Naive thymus-derived CD4-positive, alpha-beta T cell (primary cell): ENCODE measurements at regions of chr2 and their contacts with region 1.

Region 1: GRCh38 chr2:210195101-210195852 is 24.1 kb upstream of the KANSL1L start:
- DNase-seq: peak in 7 of 9 donors; percentile 20 to 55 (median 39)
- ATAC-seq: peak; percentile 58
- H3K4me3 ChIP-seq: no peak overlapping the region
- H3K4me3 Mint-ChIP-seq: no peak overlapping the region
- H3K27ac ChIP-seq: no peak overlapping the region
- H3K27ac Mint-ChIP-seq: no peak overlapping the region
- H3K4me1 ChIP-seq: no peaks in the 10 kb centered on the region
- H3K4me1 Mint-ChIP-seq: peaks cover 0 to 3% (median 0%) of the 10 kb centered on the region in 7 donors
- H3K27me3 ChIP-seq: no peaks in the 10 kb centered on the region
- H3K27me3 Mint-ChIP-seq: peaks cover 0 to 16% (median 0%) of the 10 kb centered on the region in 5 donors

Region 2: GRCh38 chr2:208466151-208466919 is 1728.9 kb before region 1 on chr2:
- CTCF ChIA-PET with region 1: no interaction called
- POLR2A ChIA-PET with region 1: no interaction called
- intact Hi-C with region 1: loop called in 1 of 2 experiments (anchors 5 kb)
- DNase-seq: no peak
- ATAC-seq: no peak
- H3K4me3 ChIP-seq: no peak overlapping the region
- H3K4me3 Mint-ChIP-seq: no peak overlapping the region
- H3K27ac ChIP-seq: no peak overlapping the region
- H3K27ac Mint-ChIP-seq: no peak overlapping the region
- H3K4me1 ChIP-seq: no peaks in the 10 kb centered on the region
- H3K4me1 Mint-ChIP-seq: no peaks in the 10 kb centered on the region
- H3K27me3 ChIP-seq: no peaks in the 10 kb centered on the region
- H3K27me3 Mint-ChIP-seq: peaks cover 2 to 17% (median 7%) of the 10 kb centered on the region in 5 donors

Region 3: DNA sequence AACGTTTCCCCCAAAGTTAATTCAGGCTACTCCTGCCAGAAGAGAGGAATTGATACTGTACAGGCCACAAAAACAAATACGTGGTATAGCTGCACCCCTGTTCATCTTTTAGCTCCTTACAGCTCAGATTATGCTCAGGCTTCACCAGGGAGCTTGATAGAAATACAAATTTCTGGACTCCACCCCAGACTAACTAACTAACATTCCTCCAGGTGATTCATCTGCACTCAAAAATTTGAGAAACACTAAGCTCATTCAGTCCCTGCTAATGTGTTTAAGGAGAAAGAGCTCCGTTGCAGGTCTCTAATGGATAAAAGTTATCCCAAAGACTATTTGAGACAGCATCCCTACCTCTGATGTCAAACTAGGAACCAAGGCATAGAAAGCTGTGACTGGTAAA is 460.5 kb before region 1 on chr2:
- CTCF ChIA-PET with region 1: no interaction called
- POLR2A ChIA-PET with region 1: no interaction called
- intact Hi-C with region 1: no loop called
- DNase-seq: no peak
- ATAC-seq: no peak
- H3K4me3 ChIP-seq: no peak overlapping the region
- H3K4me3 Mint-ChIP-seq: no peak overlapping the region
- H3K27ac ChIP-seq: no peak overlapping the region
- H3K27ac Mint-ChIP-seq: no peak overlapping the region
- H3K4me1 ChIP-seq: no peaks in the 10 kb centered on the region
- H3K4me1 Mint-ChIP-seq: no peaks in the 10 kb centered on the region
- H3K27me3 ChIP-seq: no peaks in the 10 kb centered on the region
- H3K27me3 Mint-ChIP-seq: peaks cover 0 to 3% (median 0%) of the 10 kb centered on the region in 5 donors

Region 4: GRCh38 chr2:209936106-209936666 is 259.1 kb before region 1 on chr2:
- CTCF ChIA-PET with region 1: interaction called, 3 read pairs
- POLR2A ChIA-PET with region 1: no interaction called
- intact Hi-C with region 1: loop called in 1 of 2 experiments (anchors 1 kb)
- DNase-seq: no peak
- ATAC-seq: no peak
- H3K4me3 ChIP-seq: no peak overlapping the region
- H3K4me3 Mint-ChIP-seq: no peak overlapping the region
- H3K27ac ChIP-seq: no peak overlapping the region
- H3K27ac Mint-ChIP-seq: no peak overlapping the region
- H3K4me1 ChIP-seq: no peaks in the 10 kb centered on the region
- H3K4me1 Mint-ChIP-seq: no peaks in the 10 kb centered on the region
- H3K27me3 ChIP-seq: no peaks in the 10 kb centered on the region
- H3K27me3 Mint-ChIP-seq: peaks cover 0 to 24% (median 13%) of the 10 kb centered on the region in 5 donors

Region 5: GRCh38 chr2:209988010-209988409 is 207.3 kb before region 1 on chr2:
- CTCF ChIA-PET with region 1: interaction called, 10 read pairs
- POLR2A ChIA-PET with region 1: interaction called, 3 read pairs
- intact Hi-C with region 1: no loop called
- DNase-seq: no peak
- ATAC-seq: peak; percentile 52
- H3K4me3 ChIP-seq: no peak overlapping the region
- H3K4me3 Mint-ChIP-seq: no peak overlapping the region
- H3K27ac ChIP-seq: no peak overlapping the region
- H3K27ac Mint-ChIP-seq: no peak overlapping the region
- H3K4me1 ChIP-seq: no peaks in the 10 kb centered on the region
- H3K4me1 Mint-ChIP-seq: peaks cover 0 to 2% (median 0%) of the 10 kb centered on the region in 7 donors
- H3K27me3 ChIP-seq: no peaks in the 10 kb centered on the region
- H3K27me3 Mint-ChIP-seq: peaks cover 4 to 35% (median 15%) of the 10 kb centered on the region in 5 donors

Region 6: GRCh38 chr2:210171309-210172203 is 23.7 kb before region 1 on chr2 and contains the start of gene KANSL1L:
- CTCF ChIA-PET with region 1: interaction called, 3 read pairs
- POLR2A ChIA-PET with region 1: interaction called, 3 read pairs
- intact Hi-C with region 1: loop called (anchors 1 to 2 kb)
- DNase-seq: peak; percentile 92 to 99 (median 94)
- ATAC-seq: peak; percentile 95
- H3K4me3 ChIP-seq: peak within 1 kb of the TSS; percentile 89
- H3K4me3 Mint-ChIP-seq: peak within 1 kb of the TSS; percentile 90 to 100 (median 98)
- H3K27ac ChIP-seq: peak within 1 kb of the TSS; percentile 93
- H3K27ac Mint-ChIP-seq: peak within 1 kb of the TSS; percentile 93 to 99 (median 96)
- H3K4me1 ChIP-seq: peaks cover 6 to 7% of the 10 kb centered on the region in 2 donors
- H3K4me1 Mint-ChIP-seq: peaks cover 17 to 42% (median 33%) of the 10 kb centered on the region in 7 donors
- H3K27me3 ChIP-seq: no peaks in the 10 kb centered on the region
- H3K27me3 Mint-ChIP-seq: peaks cover 0 to 41% (median 0%) of the 10 kb centered on the region in 5 donors
- total RNA-seq, gene KANSL1L: 6.3 to 23.3 (median 13.3) TPM